ENCODE measurements at regions of chrX and their contacts with region 1.

Region 1: DNA sequence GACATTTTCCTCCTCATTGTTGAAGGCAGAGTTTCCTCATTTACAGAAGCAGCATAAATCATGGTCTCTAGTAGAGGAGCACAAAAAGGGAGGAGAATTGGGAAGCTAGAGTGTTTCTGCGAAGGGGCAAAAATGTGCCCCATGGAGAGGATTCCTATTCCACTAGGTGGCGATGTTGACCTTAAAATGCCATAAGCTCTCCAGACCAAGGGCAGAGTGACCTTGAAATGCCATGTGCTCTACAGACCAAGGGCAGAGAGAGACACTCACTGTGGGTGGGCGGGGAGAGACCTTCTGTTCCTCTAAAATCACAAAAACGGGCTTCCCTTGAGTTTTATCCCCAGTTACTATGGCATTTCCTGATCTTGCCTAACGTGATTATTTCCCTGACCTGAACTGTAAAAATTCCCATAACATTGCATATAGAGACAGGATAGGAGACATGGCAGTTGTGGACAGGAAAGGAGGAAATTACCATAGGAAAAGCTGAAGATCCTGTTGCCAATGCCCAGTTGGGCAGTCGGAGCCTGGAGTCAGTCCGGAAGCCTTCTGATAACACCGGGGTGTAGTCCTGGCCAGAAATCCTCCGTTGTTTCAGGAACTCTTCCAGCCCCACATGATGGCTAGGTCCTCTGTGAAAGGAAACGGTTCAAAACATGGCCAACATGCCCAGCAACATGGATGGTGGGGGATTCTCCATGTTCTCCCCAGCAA is 567.7 kb downstream of the MAGEB5 start:
- DNase-seq: peak in 1 of 2 experiments; percentile 1
- H3K4me3 ChIP-seq: no peak overlapping the region
- H3K27ac ChIP-seq: no peak overlapping the region
- H3K4me1 ChIP-seq: no peaks in the 10 kb centered on the region
- H3K27me3 ChIP-seq: no peaks in the 10 kb centered on the region
- CTCF ChIP-seq: peak; percentile 63

Region 2: GRCh38 chrX:27186664-27187063 is 403.0 kb after region 1 on chrX:
- CTCF ChIA-PET with region 1: no interaction called
- POLR2A ChIA-PET with region 1: no interaction called
- intact Hi-C with region 1: loop called (anchors 5 kb)
- DNase-seq: peak; percentile 14 to 37
- H3K4me3 ChIP-seq: no peak overlapping the region
- H3K27ac ChIP-seq: no peak overlapping the region
- H3K4me1 ChIP-seq: no peaks in the 10 kb centered on the region
- H3K27me3 ChIP-seq: no peaks in the 10 kb centered on the region
- CTCF ChIP-seq: peak; percentile 84

Region 3: GRCh38 chrX:27336466-27337091 is 552.9 kb after region 1 on chrX:
- CTCF ChIA-PET with region 1: no interaction called
- POLR2A ChIA-PET with region 1: no interaction called
- intact Hi-C with region 1: loop called (anchors 2 kb)
- DNase-seq: peak in 1 of 2 experiments; percentile 19
- H3K4me3 ChIP-seq: no peak overlapping the region; the same call in 1 of the 2 replicates
- H3K27ac ChIP-seq: no peak overlapping the region
- H3K4me1 ChIP-seq: no peaks in the 10 kb centered on the region
- H3K27me3 ChIP-seq: no peaks in the 10 kb centered on the region
- CTCF ChIP-seq: peak; percentile 87

Measured in PC-9 (cell line).